Right lobe of liver (tissue), 6 donors: ENCODE measurements at regions of chr4 and their contacts with region 1.

Region 1: GRCh38 chr4:7462509-7462971 is 27.8 kb upstream of the PSAPL1 start:
- DNase-seq: peak in 2 of 3 donors; percentile 55 to 69
- ATAC-seq: peak; percentile 80 to 86 (median 81)
- H3K4me3 ChIP-seq: no peak overlapping the region
- H3K27ac ChIP-seq: peak overlapping the region in 1 of 3 donors; percentile 34
- H3K4me1 ChIP-seq: peaks cover 0 to 23% (median 8%) of the 10 kb centered on the region in 4 donors
- H3K27me3 ChIP-seq: no peaks in the 10 kb centered on the region
- CTCF ChIP-seq: peak; percentile 60 to 73 (median 66)
- POLR2A ChIP-seq: no peak

Region 2: DNA sequence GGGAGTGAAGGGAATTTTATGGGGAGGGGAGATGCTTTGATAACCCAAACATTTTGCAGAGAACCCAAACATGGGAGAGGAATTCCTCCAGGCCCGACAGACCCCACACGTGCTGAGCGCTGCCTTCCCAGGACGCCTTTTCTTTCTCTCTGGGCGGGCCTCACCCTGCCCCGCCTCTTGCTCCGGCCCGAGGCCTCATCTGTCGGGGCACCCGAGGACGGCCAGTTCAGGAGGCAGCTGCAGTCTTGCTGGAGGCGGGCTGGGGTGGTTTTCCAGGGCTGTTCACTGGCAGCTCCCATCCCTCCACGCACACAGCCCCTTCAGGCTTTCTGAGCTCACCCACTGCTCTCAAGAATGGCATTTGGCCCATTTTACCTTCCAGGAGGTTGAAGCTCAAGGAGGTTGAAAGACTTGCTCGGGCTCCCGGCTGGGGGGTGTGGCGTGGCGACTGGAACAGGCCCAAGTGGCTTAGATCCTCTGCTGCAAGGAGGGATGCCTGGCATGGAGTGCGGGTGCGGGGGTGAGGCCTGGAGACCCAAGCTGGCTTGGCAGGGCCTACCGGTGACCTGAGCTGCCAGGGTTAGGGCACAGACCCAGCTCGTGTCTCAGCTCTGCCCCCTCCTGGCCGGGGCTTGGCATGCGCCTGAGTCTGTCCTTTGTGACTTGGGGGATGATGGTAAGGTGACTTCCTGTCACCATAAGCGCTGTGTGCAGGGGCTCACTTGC is 127.0 kb before region 1 on chr4:
- intact Hi-C with region 1: loop called in 1 of 2 experiments (anchors 5 kb)
- DNase-seq: peak; percentile 57 to 75 (median 66)
- ATAC-seq: peak; percentile 63 to 72 (median 68)
- H3K4me3 ChIP-seq: no peak overlapping the region
- H3K27ac ChIP-seq: no peak overlapping the region
- H3K4me1 ChIP-seq: peaks cover 0 to 15% (median 3%) of the 10 kb centered on the region in 4 donors
- H3K27me3 ChIP-seq: no peaks in the 10 kb centered on the region
- CTCF ChIP-seq: peak; percentile 40 to 77 (median 54)
- POLR2A ChIP-seq: no peak

Region 3: DNA sequence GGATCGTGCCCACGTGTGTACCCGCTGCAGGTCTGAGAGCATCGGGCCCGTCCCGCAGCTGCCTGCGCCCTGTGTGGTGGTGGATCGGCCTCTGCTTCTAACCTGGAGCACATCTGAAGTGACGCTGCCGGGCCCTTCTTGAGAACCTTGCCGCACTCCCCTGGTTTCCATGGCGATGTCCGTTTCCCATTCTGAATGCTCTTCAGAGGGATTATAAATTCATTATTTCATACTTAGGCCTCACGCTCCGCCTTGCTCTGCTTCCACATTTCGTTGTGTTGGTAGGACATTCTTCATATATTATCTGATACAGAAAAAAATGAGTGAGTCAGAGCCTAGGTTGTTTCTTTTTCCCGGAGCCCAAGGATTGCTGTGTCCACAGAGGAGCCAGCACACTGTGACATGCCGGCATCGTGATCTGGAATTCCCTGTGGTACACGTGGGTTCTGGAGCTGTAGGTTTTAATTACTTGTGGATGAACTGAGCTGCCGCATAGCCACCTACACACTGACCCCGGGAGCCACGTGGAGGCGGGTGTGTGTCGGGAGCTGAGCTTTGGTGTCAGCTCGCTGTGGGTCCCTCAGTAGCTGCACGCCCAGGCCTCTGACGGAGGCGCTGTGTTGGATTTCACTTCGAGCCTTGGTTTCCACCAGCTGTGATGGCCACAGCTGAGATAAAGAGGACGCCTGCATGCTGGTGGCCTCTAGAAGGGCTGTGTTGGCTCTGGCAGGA is 91.2 kb before region 1 on chr4:
- intact Hi-C with region 1: no loop called
- DNase-seq: peak in 1 of 3 donors; percentile 2
- ATAC-seq: no peak
- H3K4me3 ChIP-seq: no peak overlapping the region
- H3K27ac ChIP-seq: no peak overlapping the region
- H3K4me1 ChIP-seq: no peaks in the 10 kb centered on the region
- H3K27me3 ChIP-seq: no peaks in the 10 kb centered on the region
- CTCF ChIP-seq: no peak
- POLR2A ChIP-seq: no peak

Region 4: DNA sequence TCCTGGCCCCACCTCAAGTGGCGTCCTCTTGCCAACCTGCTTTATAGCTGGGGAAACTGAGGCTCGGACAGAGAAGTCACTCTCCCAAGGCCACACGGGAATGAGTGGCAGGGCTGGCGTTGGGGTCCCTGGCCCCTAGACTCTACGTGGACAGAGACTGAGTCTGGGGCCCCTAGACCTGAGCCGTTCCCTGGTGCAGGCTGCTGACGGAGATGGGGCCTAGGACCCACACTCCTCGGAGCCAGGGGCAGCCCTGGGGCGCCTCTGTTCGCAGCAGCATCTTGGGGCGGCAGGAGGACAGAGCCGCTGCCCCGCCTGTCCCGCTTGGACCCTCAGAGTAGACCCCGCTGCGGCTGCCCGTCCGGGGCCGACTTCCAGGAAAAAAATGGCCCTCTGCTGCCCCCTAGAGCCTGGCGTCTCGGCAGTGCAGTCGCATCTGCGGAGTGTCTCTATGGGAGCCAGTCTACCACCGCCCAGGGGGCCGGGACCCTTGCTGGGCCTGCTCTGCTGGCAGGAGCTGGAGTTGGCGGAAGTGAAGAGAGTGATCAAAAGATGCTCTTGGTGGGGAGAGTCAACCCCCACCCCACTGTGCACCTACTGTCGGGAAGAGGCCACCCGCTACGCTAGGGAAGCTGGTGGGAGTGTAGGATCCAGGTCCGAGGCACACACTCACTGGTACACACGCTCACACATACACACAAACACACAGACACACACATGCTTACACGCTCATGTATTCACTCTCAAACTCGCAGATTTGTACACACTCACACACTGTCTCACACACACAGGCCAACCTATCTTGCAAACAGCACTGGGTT is 257.0 kb after region 1 on chr4:
- intact Hi-C with region 1: loop called in 1 of 2 experiments (anchors 10 kb)
- DNase-seq: peak in 2 of 3 donors; percentile 68 to 71
- ATAC-seq: peak; percentile 67 to 82 (median 78)
- H3K4me3 ChIP-seq: no peak overlapping the region
- H3K27ac ChIP-seq: no peak overlapping the region
- H3K4me1 ChIP-seq: no peaks in the 10 kb centered on the region
- H3K27me3 ChIP-seq: no peaks in the 10 kb centered on the region
- CTCF ChIP-seq: peak; percentile 81 to 92 (median 86)
- POLR2A ChIP-seq: no peak